ENCODE measurements at regions of chr7 and their contacts with region 1.

Region 1: GRCh38 chr7:79302293-79302692 is 151.2 kb downstream of the MAGI2 start:
- DNase-seq: no peak
- H3K4me3 ChIP-seq: no peak overlapping the region
- H3K27ac ChIP-seq: no peak overlapping the region
- H3K4me1 ChIP-seq: no peaks in the 10 kb centered on the region
- H3K27me3 ChIP-seq: no peaks in the 10 kb centered on the region
- CTCF ChIP-seq: no peak
- POLR2A ChIP-seq: no peak

Region 2: GRCh38 chr7:79459381-79459780 is 157.1 kb after region 1 on chr7:
- intact Hi-C with region 1: loop called in 1 of 2 experiments (anchors 5 kb)
- DNase-seq: no peak
- H3K4me3 ChIP-seq: no peak overlapping the region
- H3K27ac ChIP-seq: no peak overlapping the region
- H3K4me1 ChIP-seq: peaks cover 16 to 32% of the 10 kb centered on the region in 2 donors
- H3K27me3 ChIP-seq: no peaks in the 10 kb centered on the region
- CTCF ChIP-seq: no peak
- POLR2A ChIP-seq: no peak